ENCODE measurements at regions of chrX and their contacts with region 1.

Region 1: GRCh38 chrX:20252381-20253231 is 14.1 kb downstream of the RPS6KA3 start:
- DNase-seq: peak; percentile 45
- H3K4me3 ChIP-seq: no peak overlapping the region
- H3K27ac ChIP-seq: no peak overlapping the region
- H3K4me1 ChIP-seq: peaks cover 8% of the 10 kb centered on the region
- H3K27me3 ChIP-seq: no peaks in the 10 kb centered on the region
- CTCF ChIP-seq: peak; percentile 61

Region 2: GRCh38 chrX:20442597-20442996 is 190.0 kb after region 1 on chrX:
- intact Hi-C with region 1: loop called (anchors 5 kb)
- DNase-seq: peak; percentile 79
- H3K4me3 ChIP-seq: no peak overlapping the region
- H3K27ac ChIP-seq: no peak overlapping the region
- H3K4me1 ChIP-seq: no peaks in the 10 kb centered on the region
- H3K27me3 ChIP-seq: no peaks in the 10 kb centered on the region
- CTCF ChIP-seq: peak; percentile 67

Measured in left ventricle myocardium inferior (tissue), 1 donor.